Activated T-helper 1 cell treated with anti-CD3 and anti-CD28 coated beads, Interleukin-12 subunit alpha, Interleukin-12 subunit beta, Interleukin-2, Interleukin-4 antibody, amounts not matched to agents 30 ng/mL and 10 ng/mL and 1 ng/mL, durations not matched to agents 14 hours and 24 hours and 36 hours (primary cell): ENCODE measurements at regions of chr2 and their contacts with region 1.

Region 1: GRCh38 chr2:86440631-86441391 is at the start of gene KDM3A:
- DNase-seq: peak; percentile 99
- H3K4me3 Mint-ChIP-seq: peak within 1 kb of the TSS; percentile 96
- H3K27ac Mint-ChIP-seq: peak within 1 kb of the TSS; percentile 98
- H3K4me1 Mint-ChIP-seq: peaks cover 50% of the 10 kb centered on the region
- H3K27me3 Mint-ChIP-seq: peaks cover 11% of the 10 kb centered on the region
- total RNA-seq, gene KDM3A: 61.6 and 67.3 TPM in 2 replicates

Region 2: GRCh38 chr2:85327822-85328617 is 1112.8 kb before region 1 on chr2 and contains the start of gene TGOLN2:
- intact Hi-C with region 1: loop called (anchors 2 kb)
- DNase-seq: peak; percentile 92
- H3K4me3 Mint-ChIP-seq: peak within 1 kb of the TSS; percentile 95
- H3K27ac Mint-ChIP-seq: peak within 1 kb of the TSS; percentile 99
- H3K4me1 Mint-ChIP-seq: peaks cover 34% of the 10 kb centered on the region
- H3K27me3 Mint-ChIP-seq: no peaks in the 10 kb centered on the region
- total RNA-seq, gene TGOLN2: 102 and 104 TPM in 2 replicates

Region 3: DNA sequence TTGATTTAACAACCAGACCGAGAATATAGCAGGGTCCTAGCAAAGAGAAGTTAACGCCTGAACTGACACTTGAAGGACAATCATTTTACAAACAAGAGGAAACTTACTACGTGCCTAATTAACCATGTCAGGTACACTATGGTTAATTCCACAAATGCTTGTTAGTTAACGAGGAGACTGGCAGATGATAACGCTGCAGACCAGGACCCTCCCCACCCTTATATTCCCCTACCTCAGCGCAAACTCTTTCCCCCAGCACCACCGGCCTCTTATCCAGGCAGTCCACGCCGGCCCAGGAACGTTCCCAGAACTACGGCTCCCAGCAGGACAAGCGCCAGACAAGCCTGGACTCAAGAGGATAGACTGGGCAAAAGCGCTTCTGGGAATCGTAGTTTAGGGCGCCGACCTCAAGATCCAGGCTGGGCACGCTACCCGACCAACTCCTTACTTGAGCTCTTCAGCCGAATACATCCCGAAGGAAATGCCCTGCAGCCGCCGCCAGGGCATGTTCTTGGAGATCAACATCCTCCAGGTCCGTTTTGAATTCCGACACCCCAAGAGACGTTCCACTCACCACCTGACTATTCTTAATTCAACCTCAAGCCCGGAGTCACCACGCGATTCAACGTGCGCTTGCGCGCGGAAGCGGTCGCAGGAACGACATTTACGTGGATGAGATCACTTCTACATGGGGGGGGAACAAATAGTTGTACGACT is 335.4 kb before region 1 on chr2 and contains the start of gene POLR1A:
- intact Hi-C with region 1: loop called (anchors 1 kb)
- DNase-seq: peak; percentile 84
- H3K4me3 Mint-ChIP-seq: peak within 1 kb of the TSS; percentile 91
- H3K27ac Mint-ChIP-seq: peak within 1 kb of the TSS; percentile 99
- H3K4me1 Mint-ChIP-seq: peaks cover 55% of the 10 kb centered on the region
- H3K27me3 Mint-ChIP-seq: no peaks in the 10 kb centered on the region
- total RNA-seq, gene POLR1A: 69.7 and 74.6 TPM in 2 replicates

Region 4: DNA sequence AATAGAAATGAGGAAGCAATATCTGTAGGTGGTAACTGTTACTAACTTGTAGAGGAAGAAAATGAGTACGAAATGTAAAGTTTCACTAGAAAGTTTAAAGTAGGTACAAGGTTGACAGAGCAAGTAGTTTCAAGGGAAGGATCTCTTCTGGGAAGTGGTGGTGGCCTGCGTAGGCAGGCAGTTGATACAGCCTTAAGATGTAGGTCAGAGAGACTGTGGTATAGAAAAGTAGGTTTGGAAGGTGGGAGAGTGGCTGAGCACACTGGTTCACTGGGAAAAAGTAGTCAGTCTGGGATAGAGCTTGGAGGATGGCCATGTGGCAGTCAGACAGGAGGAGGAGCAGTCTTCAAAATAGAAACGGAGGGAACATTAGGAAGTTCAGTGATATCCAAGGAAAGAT is 23.8 kb after region 1 on chr2:
- intact Hi-C with region 1: loop called (anchors 1 kb)
- DNase-seq: no peak
- H3K4me3 Mint-ChIP-seq: peak overlapping the region; percentile 58
- H3K27ac Mint-ChIP-seq: peak overlapping the region; percentile 67
- H3K4me1 Mint-ChIP-seq: peaks cover 56% of the 10 kb centered on the region
- H3K27me3 Mint-ChIP-seq: no peaks in the 10 kb centered on the region

Region 5: GRCh38 chr2:86562922-86563649 is 122.3 kb after region 1 on chr2 and contains the start of gene CHMP3:
- intact Hi-C with region 1: loop called (anchors 1 kb)
- DNase-seq: peak; percentile 96
- H3K4me3 Mint-ChIP-seq: peak within 1 kb of the TSS; percentile 97
- H3K27ac Mint-ChIP-seq: peak within 1 kb of the TSS; percentile 98
- H3K4me1 Mint-ChIP-seq: peaks cover 46% of the 10 kb centered on the region
- H3K27me3 Mint-ChIP-seq: no peaks in the 10 kb centered on the region
- total RNA-seq, gene CHMP3: 27.7 and 27.9 TPM in 2 replicates